Breast epithelium (tissue), 4 donors: ENCODE measurements at regions of chrX and their contacts with region 1.

Region 1: GRCh38 chrX:155132110-155132509 is 60.8 kb downstream of the BRCC3 start:
- DNase-seq: no peak
- H3K4me3 ChIP-seq: no peak overlapping the region
- H3K27ac ChIP-seq: no peak overlapping the region
- H3K4me1 ChIP-seq: no peaks in the 10 kb centered on the region
- H3K27me3 ChIP-seq: no peaks in the 10 kb centered on the region
- CTCF ChIP-seq: no peak
- POLR2A ChIP-seq: no peak

Region 2: DNA sequence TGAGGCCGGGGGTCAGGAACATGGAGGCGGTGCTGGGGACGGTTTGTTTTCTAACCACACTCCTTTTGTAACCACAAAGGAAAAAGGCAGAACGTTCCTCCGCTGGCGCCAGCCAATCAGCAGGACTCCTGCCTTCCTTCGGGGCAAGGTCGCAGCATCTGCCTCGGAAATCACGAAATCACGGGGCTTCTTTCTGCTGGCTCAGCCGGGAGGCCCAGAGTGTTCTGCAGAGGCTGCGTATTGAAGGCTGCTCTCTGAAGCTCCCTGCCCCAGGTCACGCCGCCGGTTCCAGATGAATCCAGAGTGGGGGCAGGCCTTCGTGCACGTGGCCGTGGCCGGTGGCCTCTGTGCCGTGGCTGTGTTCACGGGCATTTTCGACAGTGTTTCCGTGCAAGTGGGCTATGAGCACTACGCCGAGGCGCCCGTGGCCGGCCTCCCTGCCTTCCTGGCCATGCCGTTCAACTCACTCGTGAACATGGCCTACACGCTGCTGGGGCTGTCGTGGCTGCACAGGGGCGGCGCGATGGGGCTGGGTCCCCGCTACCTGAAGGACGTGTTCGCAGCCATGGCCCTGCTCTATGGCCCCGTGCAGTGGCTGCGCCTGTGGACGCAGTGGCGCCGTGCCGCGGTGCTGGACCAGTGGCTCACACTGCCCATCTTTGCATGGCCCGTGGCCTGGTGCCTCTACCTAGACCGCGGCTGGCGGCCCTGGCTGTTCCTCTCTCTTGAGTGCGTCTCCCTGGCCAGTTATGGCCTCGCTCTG is 1150.2 kb before region 1 on chrX:
- intact Hi-C with region 1: no loop called
- DNase-seq: no peak
- H3K4me3 ChIP-seq: no peak overlapping the region
- H3K27ac ChIP-seq: peak overlapping the region; percentile 17 to 55
- H3K4me1 ChIP-seq: no peaks in the 10 kb centered on the region
- H3K27me3 ChIP-seq: peaks cover 0 to 36% of the 10 kb centered on the region in 2 donors
- CTCF ChIP-seq: no peak
- POLR2A ChIP-seq: no peak

Region 3: GRCh38 chrX:155026726-155027508 is 105.2 kb before region 1 on chrX and contains the start of gene FUNDC2:
- intact Hi-C with region 1: loop called (anchors 2 kb)
- DNase-seq: peak; percentile 89 to 91
- H3K4me3 ChIP-seq: peak within 1 kb of the TSS; percentile 55 to 83 (median 65)
- H3K27ac ChIP-seq: peak within 1 kb of the TSS; percentile 95 to 99
- H3K4me1 ChIP-seq: no peaks in the 10 kb centered on the region
- H3K27me3 ChIP-seq: no peaks in the 10 kb centered on the region
- CTCF ChIP-seq: no peak
- POLR2A ChIP-seq: no peak
- total RNA-seq, gene FUNDC2: 76.7 to 99.0 (median 81.0) TPM